ENCODE measurements at regions of chr17 and their contacts with region 1.

Region 1: GRCh38 chr17:77681861-77682260 is 276.6 kb upstream of the TNRC6C start:
- DNase-seq: peak; percentile 79

Region 2: GRCh38 chr17:77602062-77602746 is 79.7 kb before region 1 on chr17:
- intact Hi-C with region 1: loop called (anchors 2 kb)
- DNase-seq: peak; percentile 89

Region 3: DNA sequence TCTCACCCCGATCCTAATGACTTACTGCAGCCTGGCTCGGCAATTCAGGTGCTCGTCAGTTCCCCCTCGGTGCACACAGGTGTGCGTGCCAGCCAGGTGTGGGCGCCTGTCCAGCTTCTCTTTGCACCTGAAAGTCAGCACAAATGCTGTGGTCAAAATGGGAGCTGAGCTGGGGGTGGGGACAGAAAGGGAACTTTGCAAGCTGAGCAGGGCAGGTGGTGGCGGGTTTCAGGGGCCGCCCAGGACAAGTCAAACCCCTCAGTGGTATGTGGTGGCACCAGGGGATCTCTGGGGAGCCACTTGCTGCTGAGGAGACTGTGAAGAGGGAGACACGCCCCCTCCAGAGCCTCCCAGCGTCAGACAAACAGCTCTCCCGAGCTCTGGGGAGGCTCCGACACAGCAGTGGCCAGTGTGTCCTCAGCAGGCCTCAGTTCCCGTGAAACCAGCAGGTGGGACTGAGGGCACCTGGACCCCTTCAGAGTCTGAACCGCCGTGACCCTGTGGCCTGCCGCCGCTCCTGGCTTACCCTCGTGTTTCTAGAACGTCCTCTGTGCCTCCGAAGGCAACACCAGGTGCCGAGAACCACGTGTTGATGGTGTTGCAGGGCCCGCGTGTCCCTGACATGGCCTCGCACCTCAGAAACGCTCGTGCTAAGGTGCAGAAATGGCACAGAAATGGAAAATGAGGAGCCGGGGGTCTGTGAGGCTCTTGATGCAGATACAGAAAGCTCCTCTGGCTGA is 43.2 kb after region 1 on chr17:
- intact Hi-C with region 1: loop called (anchors 5 kb)
- DNase-seq: no peak